IMR-90 (cell line): ENCODE measurements at regions of chr1 and their contacts with region 1.

Region 1: DNA sequence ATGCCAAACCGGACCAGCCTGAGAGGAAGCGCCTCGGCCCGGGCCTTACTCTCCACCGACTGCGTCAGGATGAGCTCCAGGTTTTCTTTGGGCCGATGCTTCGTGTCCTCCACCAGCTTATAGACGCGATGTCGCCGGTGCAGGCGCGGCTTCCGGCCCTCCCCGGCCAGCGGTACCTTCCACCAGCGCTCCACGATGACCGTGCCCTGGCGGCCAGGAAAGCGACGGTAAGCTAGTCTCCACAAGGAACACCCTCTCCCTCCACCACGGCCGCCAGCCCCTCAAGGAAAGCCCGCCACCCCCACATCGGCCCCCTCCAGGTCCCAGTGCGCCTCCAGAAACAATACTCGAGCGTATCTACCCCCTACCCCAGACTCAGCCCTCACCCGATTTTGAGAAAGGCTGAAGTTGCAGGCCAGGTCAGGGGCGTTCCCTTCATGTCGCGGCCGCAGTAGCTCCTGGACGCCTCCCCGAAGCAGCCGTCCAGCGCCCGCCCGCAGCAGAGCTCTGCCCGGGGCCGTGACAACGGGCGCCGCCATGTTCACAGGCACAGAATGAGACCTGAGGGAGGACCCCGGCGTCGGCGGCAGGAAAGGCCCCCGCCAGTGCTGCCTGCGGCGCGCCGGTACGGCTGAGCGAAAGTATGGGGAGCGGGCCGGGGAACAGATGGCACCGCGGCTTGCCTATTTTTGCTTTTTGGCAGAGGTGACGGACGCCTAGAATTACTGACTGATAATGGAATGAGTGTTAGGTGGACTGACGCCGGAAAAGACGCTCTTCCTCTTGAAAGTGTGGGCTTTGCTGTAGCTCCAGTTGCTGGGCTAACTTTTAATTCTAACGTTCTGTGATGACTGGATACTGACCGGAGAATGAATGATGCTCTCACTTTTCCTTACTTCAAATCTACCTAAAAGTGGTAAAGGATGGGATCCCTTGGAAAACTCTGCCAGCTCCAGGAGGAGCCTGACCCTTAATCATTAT is at the start of gene MRPL9:
- DNase-seq: peak; percentile 71
- ATAC-seq: peak; percentile 100
- H3K4me3 ChIP-seq: peak within 1 kb of the TSS; percentile 71
- H3K27ac ChIP-seq: peak within 1 kb of the TSS; percentile 80
- H3K4me1 ChIP-seq: peaks cover 3% of the 10 kb centered on the region; the same call in 1 of the 2 replicates
- H3K27me3 ChIP-seq: no peaks in the 10 kb centered on the region
- CTCF ChIP-seq: no peak
- POLR2A ChIP-seq: peak; percentile 78; the same call in 1 of the 2 replicates
- RAD21 ChIP-seq: no peak
- total RNA-seq, gene MRPL9: 65.4 and 85.8 TPM in 2 replicates

Region 2: GRCh38 chr1:151277249-151277648 is 486.0 kb before region 1 on chr1:
- CTCF ChIA-PET with region 1: no interaction called
- POLR2A ChIA-PET with region 1: no interaction called
- dilution Hi-C with region 1: no loop called
- in situ Hi-C with region 1: no loop called
- intact Hi-C with region 1: no loop called
- DNase-seq: no peak
- ATAC-seq: no peak
- H3K4me3 ChIP-seq: no peak overlapping the region
- H3K27ac ChIP-seq: no peak overlapping the region
- H3K4me1 ChIP-seq: no peaks in the 10 kb centered on the region
- H3K27me3 ChIP-seq: no peaks in the 10 kb centered on the region
- CTCF ChIP-seq: no peak
- POLR2A ChIP-seq: no peak
- RAD21 ChIP-seq: no peak

Region 3: DNA sequence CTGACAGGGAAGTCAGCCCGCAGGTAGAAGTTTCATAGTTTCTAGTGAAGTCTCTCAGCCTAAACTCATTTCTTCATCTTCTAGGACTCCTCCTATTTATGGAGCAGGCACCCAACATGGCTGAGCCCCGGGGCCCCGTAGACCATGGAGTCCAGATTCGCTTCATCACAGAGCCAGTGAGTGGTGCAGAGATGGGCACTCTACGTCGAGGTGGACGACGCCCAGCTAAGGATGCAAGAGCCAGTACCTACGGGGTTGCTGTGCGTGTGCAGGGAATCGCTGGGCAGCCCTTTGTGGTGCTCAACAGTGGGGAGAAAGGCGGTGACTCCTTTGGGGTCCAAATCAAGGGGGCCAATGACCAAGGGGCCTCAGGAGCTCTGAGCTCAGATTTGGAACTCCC is 244.8 kb before region 1 on chr1:
- CTCF ChIA-PET with region 1: no interaction called
- POLR2A ChIA-PET with region 1: interaction called, 10 read pairs
- dilution Hi-C with region 1: no loop called
- in situ Hi-C with region 1: no loop called
- intact Hi-C with region 1: no loop called
- DNase-seq: no peak
- ATAC-seq: no peak
- H3K4me3 ChIP-seq: no peak overlapping the region
- H3K27ac ChIP-seq: no peak overlapping the region
- H3K4me1 ChIP-seq: peaks cover 5% of the 10 kb centered on the region; the same call in 1 of the 2 replicates
- H3K27me3 ChIP-seq: peaks cover 23% of the 10 kb centered on the region
- CTCF ChIP-seq: no peak
- POLR2A ChIP-seq: no peak
- RAD21 ChIP-seq: no peak

Region 4: GRCh38 chr1:151753160-151753559 is 10.1 kb before region 1 on chr1:
- CTCF ChIA-PET with region 1: no interaction called
- POLR2A ChIA-PET with region 1: interaction called, 12 read pairs
- dilution Hi-C with region 1: no loop called
- in situ Hi-C with region 1: no loop called
- intact Hi-C with region 1: no loop called
- DNase-seq: no peak
- ATAC-seq: no peak
- H3K4me3 ChIP-seq: no peak overlapping the region
- H3K27ac ChIP-seq: no peak overlapping the region
- H3K4me1 ChIP-seq: no peaks in the 10 kb centered on the region
- H3K27me3 ChIP-seq: peaks cover 11% of the 10 kb centered on the region
- CTCF ChIP-seq: no peak
- POLR2A ChIP-seq: no peak
- RAD21 ChIP-seq: no peak

Region 5: GRCh38 chr1:151839457-151840405 is 76.5 kb after region 1 on chr1 and contains the start of gene C2CD4D:
- CTCF ChIA-PET with region 1: no interaction called
- POLR2A ChIA-PET with region 1: no interaction called
- dilution Hi-C with region 1: no loop called
- in situ Hi-C with region 1: no loop called
- intact Hi-C with region 1: loop called (anchors 5 kb)
- DNase-seq: no peak
- ATAC-seq: no peak
- H3K4me3 ChIP-seq: peak within 1 kb of the TSS; percentile 36; the same call in 1 of the 2 replicates
- H3K27ac ChIP-seq: no peak within 1 kb of the TSS
- H3K4me1 ChIP-seq: no peaks in the 10 kb centered on the region; the same call in 1 of the 2 replicates
- H3K27me3 ChIP-seq: peaks cover 55% of the 10 kb centered on the region
- CTCF ChIP-seq: no peak
- POLR2A ChIP-seq: no peak
- RAD21 ChIP-seq: no peak
- total RNA-seq, gene C2CD4D: not detected in 2 replicates

Region 6: DNA sequence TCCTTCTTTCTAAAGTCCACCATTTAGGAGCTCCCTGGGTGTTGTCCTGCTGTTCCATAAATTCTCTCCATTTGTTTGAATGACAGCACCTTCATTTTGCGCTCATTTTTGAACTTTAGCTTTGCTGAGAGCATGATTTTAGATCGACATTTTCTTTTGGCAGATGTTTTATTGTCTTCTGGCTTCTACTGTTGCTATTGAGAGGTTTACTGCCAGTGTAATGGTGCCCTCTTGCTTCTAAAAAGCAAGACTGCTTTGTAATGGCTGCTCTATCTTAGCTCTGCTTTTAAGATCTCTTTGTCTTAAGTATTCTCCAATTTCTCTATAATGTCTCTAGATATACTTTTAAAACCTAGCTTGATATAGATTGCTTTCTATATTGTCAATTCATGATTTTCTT is 118.2 kb after region 1 on chr1:
- CTCF ChIA-PET with region 1: no interaction called
- POLR2A ChIA-PET with region 1: no interaction called
- dilution Hi-C with region 1: no loop called
- in situ Hi-C with region 1: no loop called
- intact Hi-C with region 1: no loop called
- DNase-seq: no peak
- ATAC-seq: no peak
- H3K4me3 ChIP-seq: no peak overlapping the region
- H3K27ac ChIP-seq: no peak overlapping the region
- H3K4me1 ChIP-seq: no peaks in the 10 kb centered on the region
- H3K27me3 ChIP-seq: no peaks in the 10 kb centered on the region
- CTCF ChIP-seq: no peak
- POLR2A ChIP-seq: no peak
- RAD21 ChIP-seq: no peak

Region 7: GRCh38 chr1:151909150-151910149 is 146.2 kb after region 1 on chr1 and contains the start of gene THEM4:
- CTCF ChIA-PET with region 1: no interaction called
- POLR2A ChIA-PET with region 1: no interaction called
- dilution Hi-C with region 1: no loop called
- in situ Hi-C with region 1: no loop called
- intact Hi-C with region 1: loop called (anchors 2 kb)
- DNase-seq: peak; percentile 96
- ATAC-seq: peak; percentile 100
- H3K4me3 ChIP-seq: peak within 1 kb of the TSS; percentile 77
- H3K27ac ChIP-seq: peak within 1 kb of the TSS; percentile 87
- H3K4me1 ChIP-seq: no peaks in the 10 kb centered on the region
- H3K27me3 ChIP-seq: no peaks in the 10 kb centered on the region
- CTCF ChIP-seq: peak; percentile 28; the same call in 1 of the 2 replicates
- POLR2A ChIP-seq: peak; percentile 85
- RAD21 ChIP-seq: no peak
- total RNA-seq, gene THEM4: 7.3 and 8.3 TPM in 2 replicates

Region 8: DNA sequence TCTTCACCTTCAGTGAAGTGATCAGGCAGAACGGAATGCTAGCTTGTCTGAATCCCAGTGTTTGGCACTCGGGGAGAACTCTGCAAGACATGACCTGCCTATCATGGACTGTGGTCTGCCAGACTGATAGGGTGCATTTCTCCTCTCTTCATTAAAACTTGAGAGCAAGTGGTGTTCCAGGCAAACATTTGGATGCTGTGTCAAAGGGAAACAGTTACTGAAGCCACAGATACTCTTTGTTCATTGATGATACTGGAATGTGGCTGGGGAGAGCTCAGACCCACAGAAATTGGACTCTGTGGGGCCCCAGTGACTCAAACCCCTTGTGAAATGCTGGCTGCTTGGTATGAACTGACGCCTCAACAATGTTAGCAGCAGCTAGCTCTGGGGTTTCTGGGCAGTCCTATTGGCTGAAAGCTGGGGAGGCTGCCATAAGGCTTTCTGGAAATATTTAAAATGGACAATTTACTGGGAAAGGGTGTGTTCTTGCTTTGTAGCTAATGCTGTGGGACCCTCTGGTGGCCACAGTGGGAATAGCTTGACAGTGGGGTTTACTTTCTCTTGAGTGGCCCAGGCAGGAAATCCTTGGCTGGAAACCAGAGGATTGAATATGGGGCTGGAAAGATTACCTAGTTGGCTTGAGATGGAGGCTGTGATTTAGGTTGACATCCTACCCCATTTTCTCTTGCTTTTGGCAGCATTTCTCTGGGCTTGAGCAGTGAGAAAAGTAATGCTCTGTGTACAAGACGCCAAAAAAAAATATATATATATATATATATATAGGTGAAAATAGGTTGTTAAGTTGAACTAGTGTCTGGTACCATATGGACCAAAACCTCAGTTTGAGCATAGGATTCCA is 238.4 kb after region 1 on chr1:
- CTCF ChIA-PET with region 1: no interaction called
- POLR2A ChIA-PET with region 1: no interaction called
- dilution Hi-C with region 1: no loop called
- in situ Hi-C with region 1: no loop called
- intact Hi-C with region 1: loop called (anchors 5 kb)
- DNase-seq: peak; percentile 98
- ATAC-seq: peak; percentile 96
- H3K4me3 ChIP-seq: no peak overlapping the region
- H3K27ac ChIP-seq: peak overlapping the region; percentile 53; the same call in 1 of the 2 replicates
- H3K4me1 ChIP-seq: peaks cover 2% of the 10 kb centered on the region; the same call in 1 of the 2 replicates
- H3K27me3 ChIP-seq: peaks cover 24% of the 10 kb centered on the region
- CTCF ChIP-seq: peak; percentile 98
- POLR2A ChIP-seq: no peak
- RAD21 ChIP-seq: peak; percentile 96